ENCODE measurements at regions of chr14 and their contacts with region 1.

Region 1: DNA sequence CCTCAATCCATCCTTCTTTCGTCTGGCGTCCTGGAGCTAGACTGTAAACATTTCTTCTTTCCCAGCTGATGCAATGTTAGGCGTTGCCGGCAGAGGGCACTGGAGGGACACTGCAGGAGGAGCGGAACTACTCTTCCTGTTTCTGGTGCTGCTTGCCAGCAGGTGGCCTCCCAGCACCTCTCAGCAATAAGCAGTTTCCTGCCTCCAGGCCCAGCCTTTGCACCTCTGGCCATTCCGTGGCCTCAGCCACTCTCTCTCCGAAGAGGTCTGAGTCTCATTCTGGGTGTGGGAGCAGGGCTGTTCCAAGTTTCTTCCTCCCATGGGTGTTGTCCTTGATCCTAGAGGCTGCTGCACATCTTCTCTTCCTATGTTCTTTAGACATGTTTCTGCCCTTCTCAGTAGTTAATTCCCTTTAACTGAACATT is 7.5 kb upstream of the ASPG start:
- DNase-seq: peak; percentile 92
- H3K4me3 Mint-ChIP-seq: no peak overlapping the region
- H3K27ac Mint-ChIP-seq: peak overlapping the region; percentile 3
- H3K4me1 Mint-ChIP-seq: peaks cover 18% of the 10 kb centered on the region
- H3K27me3 Mint-ChIP-seq: no peaks in the 10 kb centered on the region

Region 2: GRCh38 chr14:104064003-104064402 is 14.0 kb before region 1 on chr14:
- CTCF ChIA-PET with region 1: interaction called, 12 read pairs
- POLR2A ChIA-PET with region 1: no interaction called
- intact Hi-C with region 1: no loop called
- DNase-seq: no peak
- H3K4me3 Mint-ChIP-seq: no peak overlapping the region
- H3K27ac Mint-ChIP-seq: no peak overlapping the region
- H3K4me1 Mint-ChIP-seq: no peaks in the 10 kb centered on the region
- H3K27me3 Mint-ChIP-seq: peaks cover 42% of the 10 kb centered on the region

Region 3: DNA sequence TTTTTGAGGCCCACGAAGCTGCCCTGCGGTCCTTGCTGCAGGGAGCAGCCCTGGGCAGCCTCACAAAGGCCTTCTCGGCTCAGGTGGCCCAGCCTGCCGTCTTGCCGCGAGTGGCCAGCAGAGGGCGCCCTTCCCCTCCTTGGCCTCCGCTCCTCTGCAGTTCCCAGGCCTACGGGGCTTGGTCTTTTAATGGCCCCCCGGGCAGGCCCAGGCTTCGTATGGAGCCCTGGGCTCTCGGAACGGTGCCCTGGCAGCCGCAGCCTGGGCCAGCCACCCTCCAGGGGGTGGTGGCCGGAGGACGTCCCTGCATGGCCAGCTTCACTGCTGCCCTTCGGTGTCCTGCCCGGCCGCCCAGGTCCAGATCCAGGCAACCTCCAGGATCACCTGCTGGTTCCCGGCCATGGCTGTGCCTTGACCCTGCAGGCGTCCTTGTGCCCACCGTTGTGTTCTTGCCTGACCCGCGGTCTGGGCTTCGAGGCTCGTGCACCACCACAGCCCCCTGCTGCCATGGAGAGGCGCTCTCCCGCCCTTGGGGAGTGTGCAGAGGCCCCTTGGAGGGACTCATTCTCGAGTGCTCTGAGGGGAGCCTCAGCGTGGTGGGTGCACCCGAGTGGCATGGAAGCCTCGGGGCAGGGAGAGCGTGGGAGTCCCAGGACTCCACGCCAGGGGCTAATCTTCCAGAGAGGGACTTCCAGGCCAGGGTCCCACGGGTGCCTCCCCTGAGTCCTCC is 16.8 kb after region 1 on chr14:
- CTCF ChIA-PET with region 1: interaction called, 26 read pairs
- POLR2A ChIA-PET with region 1: no interaction called
- intact Hi-C with region 1: no loop called
- DNase-seq: peak; percentile 82
- H3K4me3 Mint-ChIP-seq: no peak overlapping the region
- H3K27ac Mint-ChIP-seq: no peak overlapping the region
- H3K4me1 Mint-ChIP-seq: peaks cover 5% of the 10 kb centered on the region
- H3K27me3 Mint-ChIP-seq: peaks cover 3% of the 10 kb centered on the region

Region 4: DNA sequence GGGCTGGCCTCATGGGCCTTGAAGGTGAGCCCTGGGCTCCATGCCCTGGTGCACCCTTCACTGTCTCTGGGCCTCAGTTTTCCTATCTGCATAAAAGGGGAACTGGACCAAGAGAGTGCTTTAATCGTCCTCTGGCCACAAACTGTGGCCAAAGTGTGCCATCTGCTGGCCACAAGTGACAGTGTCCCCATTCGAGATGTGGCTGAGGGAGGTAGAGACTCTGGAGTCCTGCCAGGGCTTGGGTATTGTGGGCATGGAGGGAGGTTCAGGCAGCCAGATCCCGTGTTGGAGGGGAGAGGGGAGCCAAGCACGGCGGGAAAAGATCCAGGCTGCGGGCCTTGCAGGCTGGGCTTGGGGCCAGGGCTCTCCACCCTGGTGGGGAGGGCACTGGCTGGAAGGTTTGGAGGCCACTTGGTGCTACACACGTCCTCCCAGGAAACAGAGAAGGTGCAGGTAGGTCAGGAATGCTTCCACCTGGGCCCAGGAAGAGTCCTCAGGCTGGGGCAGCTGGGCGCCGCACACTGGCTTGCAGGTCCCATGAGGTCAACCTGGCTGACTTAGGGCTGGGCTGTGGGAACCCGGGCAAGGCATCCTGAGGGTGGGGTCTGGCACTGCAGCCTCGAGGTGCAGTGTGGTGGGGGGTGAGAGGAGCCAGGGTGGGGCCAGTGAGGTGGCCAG is 53.1 kb after region 1 on chr14:
- CTCF ChIA-PET with region 1: interaction called, 29 read pairs
- POLR2A ChIA-PET with region 1: no interaction called
- intact Hi-C with region 1: loop called (anchors 1 kb)
- DNase-seq: peak; percentile 43
- H3K4me3 Mint-ChIP-seq: no peak overlapping the region
- H3K27ac Mint-ChIP-seq: no peak overlapping the region
- H3K4me1 Mint-ChIP-seq: no peaks in the 10 kb centered on the region
- H3K27me3 Mint-ChIP-seq: peaks cover 47% of the 10 kb centered on the region

Region 5: DNA sequence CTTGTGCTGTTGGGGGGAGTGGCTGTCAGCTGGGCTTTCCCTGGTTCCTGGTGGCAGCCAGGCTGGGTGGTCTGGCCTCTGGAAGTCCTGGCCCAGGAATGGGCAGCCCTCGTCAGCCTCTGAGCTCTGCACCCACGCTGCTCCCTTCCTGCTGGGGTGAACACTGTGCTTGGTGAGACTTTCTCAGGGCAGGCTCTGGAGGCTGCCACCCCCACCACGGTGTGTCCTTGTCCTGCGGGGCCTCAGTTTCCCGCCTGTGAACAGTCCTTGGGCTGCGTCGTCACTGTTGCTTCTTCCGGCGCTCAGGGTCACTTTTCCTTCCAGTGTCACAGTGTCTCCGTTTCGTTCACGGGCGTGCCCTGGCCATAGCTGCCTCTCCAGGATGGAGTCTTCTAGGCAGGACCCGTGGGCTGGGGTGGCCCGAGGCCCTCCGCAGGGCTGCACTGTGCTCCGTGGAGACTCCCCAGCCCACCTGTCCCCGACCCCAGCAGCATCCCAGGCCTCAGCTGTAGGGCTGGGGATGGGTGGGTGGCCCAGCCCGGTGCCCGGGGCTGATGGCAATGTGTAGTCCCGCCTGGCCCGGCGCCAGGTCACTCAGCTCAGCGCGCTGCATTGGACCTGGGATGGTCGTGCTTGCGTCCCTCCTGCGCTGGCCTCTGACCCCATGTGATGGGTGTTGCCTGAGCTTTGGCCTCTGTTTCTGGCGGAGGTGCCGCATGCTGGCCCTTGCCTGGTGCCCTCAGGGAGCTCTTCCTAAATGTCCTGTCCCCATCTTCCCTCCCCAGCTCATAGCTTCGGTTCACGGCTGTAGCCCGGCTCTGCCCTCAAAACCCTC is 67.1 kb after region 1 on chr14:
- CTCF ChIA-PET with region 1: interaction called, 11 read pairs
- POLR2A ChIA-PET with region 1: no interaction called
- intact Hi-C with region 1: no loop called
- DNase-seq: no peak
- H3K4me3 Mint-ChIP-seq: no peak overlapping the region
- H3K27ac Mint-ChIP-seq: no peak overlapping the region
- H3K4me1 Mint-ChIP-seq: no peaks in the 10 kb centered on the region
- H3K27me3 Mint-ChIP-seq: peaks cover 6% of the 10 kb centered on the region

Region 6: GRCh38 chr14:104217548-104218385 is 139.7 kb after region 1 on chr14:
- CTCF ChIA-PET with region 1: no interaction called
- POLR2A ChIA-PET with region 1: no interaction called
- intact Hi-C with region 1: no loop called
- DNase-seq: no peak
- H3K4me3 Mint-ChIP-seq: no peak overlapping the region
- H3K27ac Mint-ChIP-seq: no peak overlapping the region
- H3K4me1 Mint-ChIP-seq: no peaks in the 10 kb centered on the region
- H3K27me3 Mint-ChIP-seq: peaks cover 5% of the 10 kb centered on the region

Region 7: GRCh38 chr14:104563742-104564615 is 485.9 kb after region 1 on chr14:
- CTCF ChIA-PET with region 1: interaction called, 20 read pairs
- POLR2A ChIA-PET with region 1: no interaction called
- intact Hi-C with region 1: no loop called
- DNase-seq: peak; percentile 75
- H3K4me3 Mint-ChIP-seq: no peak overlapping the region
- H3K27ac Mint-ChIP-seq: no peak overlapping the region
- H3K4me1 Mint-ChIP-seq: no peaks in the 10 kb centered on the region
- H3K27me3 Mint-ChIP-seq: peaks cover 10% of the 10 kb centered on the region

Measured in activated CD4-positive, alpha-beta memory T cell treated with anti-CD3 and anti-CD28 coated beads for 36 hours (primary cell).